HepG2 (cell line): ENCODE measurements at regions of chr19 and their contacts with region 1.

Region 1: GRCh38 chr19:1103708-1104310 is at the start of gene GPX4:
- DNase-seq: peak; percentile 96
- ATAC-seq: peak; percentile 85
- H3K4me3 ChIP-seq: peak within 1 kb of the TSS; percentile 89 to 92 (median 89)
- H3K27ac ChIP-seq: peak within 1 kb of the TSS; percentile 100
- H3K4me1 ChIP-seq: peaks cover 75% of the 10 kb centered on the region
- H3K27me3 ChIP-seq: no peaks in the 10 kb centered on the region
- CTCF ChIP-seq: no peak; the same call in 1 of the 2 replicates
- EP300 ChIP-seq: no peak
- POLR2A ChIP-seq: peak; percentile 95
- RAD21 ChIP-seq: peak; percentile 86
- total RNA-seq, gene GPX4: 426 and 535 TPM in 2 replicates

Region 2: DNA sequence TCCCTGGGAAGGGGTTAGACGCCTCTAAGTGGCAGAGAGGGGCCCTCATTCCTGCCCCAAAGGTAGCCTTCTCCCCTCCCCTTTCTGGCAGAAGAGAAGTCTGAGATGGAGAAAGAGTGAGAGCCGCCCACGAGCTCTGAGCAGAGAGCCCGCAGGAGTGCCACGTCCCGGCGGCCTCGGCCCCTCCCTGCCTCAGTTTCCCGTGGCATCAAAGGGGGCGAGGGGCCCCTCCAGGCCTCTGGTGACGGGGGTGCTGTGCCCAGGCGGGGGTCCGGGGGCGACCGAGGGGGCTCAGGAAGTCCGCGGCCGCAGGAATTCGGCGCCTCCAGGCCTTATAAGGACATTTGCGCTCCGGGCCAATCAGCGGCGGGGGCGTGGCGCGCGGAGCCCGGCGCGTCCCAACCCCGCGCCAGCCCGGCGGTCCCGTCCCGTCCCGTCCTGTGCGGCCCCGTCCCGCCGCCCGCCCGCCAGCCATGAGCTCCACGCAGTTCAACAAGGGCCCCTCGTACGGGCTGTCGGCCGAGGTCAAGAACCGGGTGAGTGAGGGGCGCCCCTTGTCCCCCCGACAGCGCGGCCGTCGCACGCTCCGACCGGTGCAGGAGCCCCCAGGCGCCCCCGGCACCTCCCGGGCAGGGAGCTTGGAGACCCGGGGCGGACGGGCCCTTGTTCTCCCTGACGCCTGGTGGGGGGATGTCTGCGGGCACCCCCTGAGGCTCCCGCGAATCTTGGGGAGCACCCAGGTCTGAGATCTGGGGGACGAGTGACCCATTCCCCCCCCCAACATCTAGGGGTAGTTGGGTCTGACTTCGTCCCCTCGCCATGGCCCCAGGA is 77.4 kb before region 1 on chr19 and contains the start of gene CNN2:
- CTCF ChIA-PET with region 1: no interaction called
- POLR2A ChIA-PET with region 1: interaction called, 14 read pairs
- in situ Hi-C with region 1: no loop called
- intact Hi-C with region 1: no loop called
- DNase-seq: peak; percentile 64
- ATAC-seq: peak; percentile 89
- H3K4me3 ChIP-seq: peak within 1 kb of the TSS; percentile 66 to 93 (median 82)
- H3K27ac ChIP-seq: peak within 1 kb of the TSS; percentile 78
- H3K4me1 ChIP-seq: peaks cover 24% of the 10 kb centered on the region
- H3K27me3 ChIP-seq: no peaks in the 10 kb centered on the region; a peak in 1 of 5 replicates
- CTCF ChIP-seq: no peak
- EP300 ChIP-seq: no peak
- POLR2A ChIP-seq: peak; percentile 50 to 55; a peak in 3 of 4 replicates
- RAD21 ChIP-seq: peak; percentile 49; the same call in 1 of the 2 replicates
- total RNA-seq, gene CNN2: 70.0 and 84.5 TPM in 2 replicates

Region 3: DNA sequence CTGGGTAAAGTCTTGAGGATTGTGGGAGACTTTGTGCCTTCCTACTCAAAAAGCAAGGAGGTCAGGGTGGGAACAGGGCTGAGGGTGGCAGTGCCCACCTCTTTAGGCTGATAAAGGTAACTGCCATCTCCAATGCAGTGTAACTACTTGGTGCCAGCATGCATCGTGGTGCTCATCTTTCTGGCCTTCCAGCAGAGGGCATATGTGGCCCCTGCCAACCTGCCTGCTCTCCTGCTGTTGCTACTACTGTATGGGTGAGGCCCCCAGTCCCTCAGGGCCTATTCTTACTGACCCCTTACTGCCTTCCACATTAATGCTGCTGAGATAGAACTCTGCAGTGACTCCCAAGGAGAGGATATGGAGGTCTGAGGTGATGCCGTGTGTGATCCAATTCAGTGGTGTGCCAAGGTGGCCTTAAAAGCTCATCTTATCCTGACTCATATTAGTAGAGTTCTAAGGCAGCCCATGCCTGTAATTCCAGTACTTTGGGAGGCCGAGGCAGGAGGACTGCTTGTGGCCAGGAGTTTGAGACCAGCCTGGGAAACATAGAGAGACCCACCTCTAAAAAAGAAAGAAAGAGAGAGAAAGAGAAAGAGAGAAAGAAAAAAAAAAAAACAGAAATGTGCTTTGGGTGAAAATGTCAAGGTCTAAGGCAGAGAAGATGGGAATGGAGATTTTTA is 46.5 kb before region 1 on chr19:
- CTCF ChIA-PET with region 1: no interaction called
- POLR2A ChIA-PET with region 1: interaction called, 3 read pairs
- in situ Hi-C with region 1: no loop called
- intact Hi-C with region 1: loop called (anchors 10 kb)
- DNase-seq: no peak
- ATAC-seq: peak; percentile 27; the same call in 2 of the 3 replicates
- H3K4me3 ChIP-seq: no peak overlapping the region
- H3K27ac ChIP-seq: no peak overlapping the region
- H3K4me1 ChIP-seq: no peaks in the 10 kb centered on the region
- H3K27me3 ChIP-seq: no peaks in the 10 kb centered on the region; a peak in 1 of 5 replicates
- CTCF ChIP-seq: peak; percentile 52
- EP300 ChIP-seq: no peak
- POLR2A ChIP-seq: no peak
- RAD21 ChIP-seq: no peak

Region 4: DNA sequence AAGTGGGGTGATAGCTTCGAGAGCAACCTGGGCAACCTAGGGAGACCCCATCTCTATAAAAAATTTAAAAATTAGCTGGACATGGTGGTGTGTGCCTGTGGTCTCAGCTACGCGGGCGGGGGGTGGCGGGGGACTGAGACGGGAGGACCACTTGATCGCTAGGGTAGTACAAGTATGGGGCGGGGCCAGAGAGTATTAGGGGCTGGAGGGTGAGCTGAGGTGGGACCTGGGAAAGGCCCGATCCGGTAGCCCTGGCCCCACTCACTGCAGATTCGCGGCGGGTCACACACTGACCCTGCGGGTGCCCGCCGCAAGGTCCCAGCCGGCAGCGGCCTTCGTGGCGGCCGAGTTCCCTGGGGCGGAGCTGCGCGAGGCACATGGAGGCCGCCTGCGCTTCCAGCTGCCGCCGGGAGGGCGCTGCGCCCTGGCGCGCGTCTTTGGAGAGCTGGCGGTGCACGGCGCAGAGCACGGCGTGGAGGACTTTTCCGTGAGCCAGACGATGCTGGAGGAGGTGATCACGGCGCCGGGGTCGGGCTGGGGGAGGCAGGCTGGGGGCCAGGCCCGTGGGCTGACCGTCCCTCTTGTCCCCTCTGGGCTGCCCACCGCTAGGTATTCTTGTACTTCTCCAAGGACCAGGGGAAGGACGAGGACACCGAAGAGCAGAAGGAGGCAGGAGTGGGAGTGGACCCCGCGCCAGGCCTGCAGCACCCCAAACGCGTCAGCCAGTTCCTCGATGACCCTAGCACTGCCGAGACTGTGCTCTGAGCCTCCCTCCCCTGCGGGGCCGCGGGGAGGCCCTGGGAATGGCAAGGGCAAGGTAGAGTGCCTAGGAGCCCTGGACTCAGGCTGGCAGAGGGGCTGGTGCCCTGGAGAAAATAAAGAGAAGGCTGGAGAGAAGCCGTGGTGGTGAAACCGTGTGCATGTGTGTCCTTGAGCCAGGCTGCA is 38.9 kb before region 1 on chr19:
- CTCF ChIA-PET with region 1: no interaction called
- POLR2A ChIA-PET with region 1: interaction called, 10 read pairs
- in situ Hi-C with region 1: loop called (anchors 5 kb)
- intact Hi-C with region 1: no loop called
- DNase-seq: no peak
- ATAC-seq: peak; percentile 53
- H3K4me3 ChIP-seq: peak overlapping the region in 2 of 3 experiments; percentile 33 to 78; a peak in 4 of 6 replicates
- H3K27ac ChIP-seq: peak overlapping the region; percentile 6
- H3K4me1 ChIP-seq: peaks cover 37% of the 10 kb centered on the region
- H3K27me3 ChIP-seq: no peaks in the 10 kb centered on the region
- CTCF ChIP-seq: peak; percentile 77
- EP300 ChIP-seq: no peak
- POLR2A ChIP-seq: no peak
- RAD21 ChIP-seq: peak; percentile 57

Region 5: GRCh38 chr19:1131738-1132551 is 28.1 kb after region 1 on chr19:
- CTCF ChIA-PET with region 1: no interaction called
- POLR2A ChIA-PET with region 1: no interaction called
- in situ Hi-C with region 1: no loop called
- intact Hi-C with region 1: no loop called
- DNase-seq: no peak
- ATAC-seq: no peak
- H3K4me3 ChIP-seq: no peak overlapping the region
- H3K27ac ChIP-seq: no peak overlapping the region
- H3K4me1 ChIP-seq: peaks cover 16% of the 10 kb centered on the region; the same call in 1 of the 2 replicates
- H3K27me3 ChIP-seq: no peaks in the 10 kb centered on the region
- CTCF ChIP-seq: no peak
- EP300 ChIP-seq: no peak
- POLR2A ChIP-seq: no peak
- RAD21 ChIP-seq: no peak